Pancreas (tissue), 10 donors: ENCODE measurements at regions of chr10 and their contacts with region 1.

Region 1: GRCh38 chr10:69413221-69413865 is 3.4 kb downstream of the TACR2 start:
- DNase-seq: peak in 2 of 6 donors; percentile 35 to 40
- ATAC-seq: peak in 2 of 4 donors; percentile 18 to 19
- H3K4me3 ChIP-seq: no peak overlapping the region
- H3K27ac ChIP-seq: no peak overlapping the region
- H3K4me1 ChIP-seq: peaks cover 0 to 4% (median 4%) of the 10 kb centered on the region in 3 donors
- H3K27me3 ChIP-seq: no peaks in the 10 kb centered on the region
- CTCF ChIP-seq: peak in 2 of 4 donors; percentile 7 to 13

Region 2: DNA sequence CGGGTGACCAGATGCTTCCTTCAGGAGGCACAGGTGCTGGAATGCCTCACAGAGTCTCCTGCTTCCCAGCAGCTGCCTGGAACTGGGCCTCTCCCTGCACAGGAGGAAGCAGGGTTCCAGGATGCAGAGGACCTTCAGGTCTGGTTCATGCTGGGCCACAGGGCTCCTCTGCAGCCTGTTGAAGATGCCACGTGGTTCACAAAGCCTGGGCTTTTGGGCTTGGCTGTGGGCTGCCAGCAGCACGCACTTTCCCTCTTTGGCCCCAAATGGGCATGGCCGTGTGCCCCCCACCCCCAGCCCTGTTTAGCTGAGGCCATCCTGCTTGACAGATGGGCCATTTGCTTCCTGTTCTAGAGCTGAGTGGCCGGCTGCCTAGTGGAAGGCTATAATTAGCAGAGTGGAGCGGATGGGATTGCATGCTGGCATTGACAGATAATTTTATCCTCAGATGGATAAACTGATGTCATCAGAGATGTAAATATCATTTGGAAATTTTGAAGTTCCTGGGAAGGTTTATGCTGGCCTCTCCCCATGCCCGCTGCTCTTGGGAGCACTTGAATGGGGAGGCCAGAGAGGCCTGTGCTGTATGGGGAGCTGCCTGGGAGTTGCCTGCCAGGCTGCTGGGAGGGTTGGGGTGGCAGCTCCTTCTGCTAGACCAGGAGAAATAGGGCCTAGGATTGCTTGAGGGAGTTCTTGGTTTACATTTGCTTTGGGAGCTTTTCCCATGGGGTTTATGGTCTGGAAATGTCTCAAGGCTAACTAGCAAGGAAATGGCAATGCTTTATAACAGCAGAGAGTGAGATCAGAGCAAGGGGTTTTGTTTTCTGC is 66.1 kb after region 1 on chr10:
- intact Hi-C with region 1: no loop called
- DNase-seq: peak in 1 of 6 donors; percentile 26
- ATAC-seq: peak in 3 of 4 donors; percentile 35 to 41 (median 38)
- H3K4me3 ChIP-seq: no peak overlapping the region
- H3K27ac ChIP-seq: peak overlapping the region in 2 of 4 donors; percentile 33 to 44
- H3K4me1 ChIP-seq: peaks cover 0 to 3% (median 0%) of the 10 kb centered on the region in 3 donors
- H3K27me3 ChIP-seq: no peaks in the 10 kb centered on the region
- CTCF ChIP-seq: no peak

Region 3: GRCh38 chr10:69506834-69507721 is 93.7 kb after region 1 on chr10:
- intact Hi-C with region 1: loop called in 1 of 3 experiments (anchors 5 kb)
- DNase-seq: no peak
- ATAC-seq: peak; percentile 14 to 25 (median 22)
- H3K4me3 ChIP-seq: peak overlapping the region in 1 of 4 donors; percentile 28
- H3K27ac ChIP-seq: peak overlapping the region in 2 of 4 donors; percentile 30 to 50
- H3K4me1 ChIP-seq: no peaks in the 10 kb centered on the region
- H3K27me3 ChIP-seq: no peaks in the 10 kb centered on the region
- CTCF ChIP-seq: no peak

Region 4: DNA sequence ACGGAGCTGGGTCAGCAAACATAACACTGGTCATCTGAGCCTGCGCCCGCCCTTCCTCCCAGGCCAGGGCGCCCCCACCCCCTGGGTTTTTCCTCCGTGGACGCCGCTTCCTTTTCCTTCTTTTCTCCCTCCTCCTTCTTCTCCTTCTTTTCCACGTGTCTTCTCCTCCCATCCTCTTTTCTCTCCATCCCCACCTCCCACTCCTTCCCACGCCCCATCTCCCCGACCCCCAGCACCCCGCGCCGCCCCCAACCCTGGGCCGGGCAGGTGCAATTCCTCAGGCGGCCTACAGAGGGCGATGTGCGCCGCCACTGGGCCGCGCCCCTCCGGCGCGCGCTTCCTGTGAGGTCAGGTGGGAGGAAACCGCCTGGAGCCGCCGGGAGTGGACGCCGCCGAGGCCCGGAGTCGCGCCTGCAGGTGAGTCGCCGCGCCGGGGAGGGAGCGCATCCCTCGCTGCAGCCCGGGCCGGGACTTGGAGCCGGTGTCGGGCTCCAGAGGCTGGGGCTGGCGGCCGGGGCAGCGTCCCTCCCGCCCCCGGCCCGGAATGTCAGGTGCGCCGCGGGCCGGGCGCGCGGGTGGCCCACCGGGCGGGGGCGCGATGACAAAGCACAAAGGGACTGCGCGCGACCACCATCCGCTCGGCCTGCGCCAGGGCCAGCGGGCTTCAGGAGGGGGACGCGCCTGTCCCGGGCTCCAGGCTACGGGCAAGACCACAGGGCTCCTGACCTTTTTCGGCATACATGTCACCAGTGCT is 216.7 kb after region 1 on chr10 and contains the start of gene FAM241B:
- intact Hi-C with region 1: loop called in 2 of 3 experiments (anchors 5 to 10 kb)
- DNase-seq: peak; percentile 75 to 94 (median 86)
- ATAC-seq: peak; percentile 97 to 100 (median 98)
- H3K4me3 ChIP-seq: peak within 1 kb of the TSS; percentile 61 to 84 (median 79)
- H3K27ac ChIP-seq: no peak within 1 kb of the TSS
- H3K4me1 ChIP-seq: peaks cover 0 to 3% (median 0%) of the 10 kb centered on the region in 3 donors
- H3K27me3 ChIP-seq: no peaks in the 10 kb centered on the region
- CTCF ChIP-seq: peak; percentile 98 to 99 (median 99)
- total RNA-seq, gene FAM241B: 2.7 to 5.8 (median 4.4) TPM